Mammary epithelial cell (primary cell): ENCODE measurements at regions of chr15 and their contacts with region 1.

Region 1: DNA sequence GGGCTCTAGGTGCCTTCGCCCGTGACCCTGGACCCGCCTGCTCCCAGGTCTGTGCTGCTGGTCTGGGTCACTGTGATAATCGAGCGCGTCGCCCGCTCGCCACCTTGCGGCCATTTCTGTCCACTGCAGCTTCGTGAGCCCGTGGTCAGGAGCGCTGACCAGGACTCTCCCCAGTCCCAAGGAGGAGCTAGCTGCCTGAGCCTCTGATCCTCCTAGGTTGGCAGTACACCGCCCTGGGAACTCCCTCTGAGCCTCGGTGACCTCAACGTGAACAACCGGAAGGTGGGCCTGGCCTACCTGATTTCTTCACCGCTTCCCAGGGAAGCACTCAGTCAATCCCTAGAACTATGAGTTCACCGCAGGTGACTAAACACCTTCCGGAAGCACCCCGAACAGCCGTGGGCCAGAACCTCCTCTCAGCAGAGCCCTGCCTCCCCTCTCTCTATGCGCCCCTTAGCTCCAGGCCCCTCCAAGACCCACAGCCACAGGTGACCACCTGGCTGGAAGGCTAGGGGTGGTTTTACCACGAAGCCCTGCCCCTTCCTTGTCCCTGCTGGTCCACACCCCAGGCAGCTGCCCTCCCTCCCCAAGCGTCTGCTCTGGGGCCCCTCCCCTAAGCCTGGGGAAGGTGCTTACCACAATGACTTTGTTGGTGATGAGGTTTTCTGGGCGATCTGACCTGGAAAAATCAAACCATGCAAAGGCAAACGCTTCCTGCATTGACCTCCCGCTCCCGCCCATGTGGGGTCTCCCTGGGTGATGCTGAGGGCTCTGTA is 9.7 kb downstream of the PLA2G4D start:
- DNase-seq: peak; percentile 94
- H3K4me3 ChIP-seq: no peak overlapping the region
- H3K27ac ChIP-seq: peak overlapping the region; percentile 42
- H3K4me1 ChIP-seq: peaks cover 24% of the 10 kb centered on the region
- H3K27me3 ChIP-seq: no peaks in the 10 kb centered on the region
- CTCF ChIP-seq: peak; percentile 86 to 91

Region 2: GRCh38 chr15:41989259-41989933 is 95.3 kb before region 1 on chr15:
- CTCF ChIA-PET with region 1: interaction called, 3 read pairs
- dilution Hi-C with region 1: no loop called
- in situ Hi-C with region 1: no loop called
- intact Hi-C with region 1: loop called (anchors 1 kb)
- DNase-seq: peak; percentile 53
- H3K4me3 ChIP-seq: no peak overlapping the region
- H3K27ac ChIP-seq: no peak overlapping the region
- H3K4me1 ChIP-seq: no peaks in the 10 kb centered on the region
- H3K27me3 ChIP-seq: no peaks in the 10 kb centered on the region
- CTCF ChIP-seq: peak; percentile 98 to 99

Region 3: GRCh38 chr15:42035435-42035761 is 49.2 kb before region 1 on chr15:
- CTCF ChIA-PET with region 1: no interaction called
- dilution Hi-C with region 1: no loop called
- in situ Hi-C with region 1: no loop called
- intact Hi-C with region 1: no loop called
- DNase-seq: peak; percentile 80
- H3K4me3 ChIP-seq: peak overlapping the region in 2 of 3 experiments; percentile 0 to 4
- H3K27ac ChIP-seq: peak overlapping the region; percentile 54
- H3K4me1 ChIP-seq: peaks cover 39% of the 10 kb centered on the region
- H3K27me3 ChIP-seq: no peaks in the 10 kb centered on the region
- CTCF ChIP-seq: no peak

Region 4: DNA sequence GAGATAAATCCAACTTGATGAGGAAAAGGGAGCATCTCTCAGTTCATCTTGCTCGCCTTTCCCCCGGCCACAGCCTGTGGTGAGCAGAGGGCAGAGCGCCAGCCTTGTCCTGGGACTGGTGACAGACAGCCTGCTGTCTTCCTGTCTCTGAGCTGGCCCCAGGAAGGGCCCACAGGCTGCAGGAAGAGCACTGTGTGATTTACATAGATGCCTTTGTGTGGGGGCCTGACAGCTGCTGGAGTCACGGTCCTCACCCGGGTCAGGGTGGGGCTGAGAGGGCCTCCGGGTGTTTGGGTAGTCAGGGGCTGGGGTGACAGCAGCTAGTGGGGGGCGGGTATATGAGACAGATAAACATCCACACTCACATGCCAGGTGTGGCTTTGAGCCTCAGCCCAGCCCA is 19.6 kb before region 1 on chr15:
- CTCF ChIA-PET with region 1: no interaction called
- dilution Hi-C with region 1: no loop called
- in situ Hi-C with region 1: no loop called
- intact Hi-C with region 1: loop called (anchors 1 kb)
- DNase-seq: no peak
- H3K4me3 ChIP-seq: no peak overlapping the region
- H3K27ac ChIP-seq: no peak overlapping the region
- H3K4me1 ChIP-seq: peaks cover 3% of the 10 kb centered on the region
- H3K27me3 ChIP-seq: no peaks in the 10 kb centered on the region
- CTCF ChIP-seq: no peak

Region 5: DNA sequence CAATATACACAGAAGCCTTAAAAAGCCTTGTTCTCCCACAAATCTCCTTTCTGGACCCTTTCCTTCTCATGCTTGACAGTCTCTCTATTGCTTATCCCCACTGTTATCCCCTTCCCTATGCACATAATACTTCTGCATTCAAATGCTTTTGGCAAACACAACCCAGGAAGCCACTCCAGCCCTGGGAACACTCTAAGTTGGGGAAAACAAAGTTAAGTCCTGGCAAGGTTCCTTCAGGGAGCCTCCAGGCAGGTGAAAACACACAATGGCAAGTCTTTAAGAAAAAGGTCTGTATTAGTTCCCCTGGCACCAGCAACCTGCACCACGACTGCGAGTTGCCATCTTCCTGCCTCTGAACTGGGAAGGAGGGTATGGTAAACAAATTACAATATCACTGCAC is 168.7 kb after region 1 on chr15:
- CTCF ChIA-PET with region 1: no interaction called
- dilution Hi-C with region 1: no loop called
- in situ Hi-C with region 1: no loop called
- intact Hi-C with region 1: no loop called
- DNase-seq: no peak
- H3K4me3 ChIP-seq: no peak overlapping the region
- H3K27ac ChIP-seq: no peak overlapping the region
- H3K4me1 ChIP-seq: no peaks in the 10 kb centered on the region
- H3K27me3 ChIP-seq: no peaks in the 10 kb centered on the region
- CTCF ChIP-seq: no peak